ENCODE measurements at regions of chr5 and their contacts with region 1.

Region 1: GRCh38 chr5:172188033-172188892 is at the start of gene STK10:
- DNase-seq: peak; percentile 88
- ATAC-seq: peak; percentile 75
- H3K4me3 Mint-ChIP-seq: peak within 1 kb of the TSS; percentile 100
- H3K27ac Mint-ChIP-seq: peak within 1 kb of the TSS; percentile 97
- H3K4me1 Mint-ChIP-seq: peaks cover 44% of the 10 kb centered on the region
- H3K27me3 Mint-ChIP-seq: no peaks in the 10 kb centered on the region
- CTCF ChIP-seq: peak; percentile 37
- total RNA-seq, gene STK10: 233 and 276 TPM in 2 replicates

Region 2: DNA sequence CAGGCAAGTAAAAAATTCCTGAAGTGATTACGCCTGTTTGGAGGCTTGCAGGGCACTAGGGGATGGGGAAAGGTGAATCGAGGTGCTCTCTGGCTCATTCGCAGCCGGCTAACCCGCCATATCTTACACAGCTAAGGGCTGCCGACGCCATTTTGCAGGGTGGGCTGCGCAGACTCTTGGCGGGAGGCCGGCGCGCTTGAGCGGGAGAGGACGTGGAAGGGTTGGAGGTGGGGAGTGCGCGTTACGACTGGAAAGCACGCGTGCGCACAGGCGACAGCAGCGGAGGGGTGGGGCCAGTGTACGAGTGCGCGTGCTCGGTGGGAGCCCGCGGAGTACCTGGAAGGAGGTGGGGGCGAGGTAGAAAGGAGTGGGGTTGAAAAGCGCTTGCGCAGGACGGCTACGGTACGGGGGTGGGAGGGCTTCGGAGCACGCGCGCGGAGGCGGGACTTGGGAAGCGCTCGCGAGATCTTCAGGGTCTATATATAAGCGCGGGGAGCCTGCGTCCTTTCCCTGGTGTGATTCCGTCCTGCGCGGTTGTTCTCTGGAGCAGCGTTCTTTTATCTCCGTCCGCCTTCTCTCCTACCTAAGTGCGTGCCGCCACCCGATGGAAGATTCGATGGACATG is 800.8 kb before region 1 on chr5 and contains the start of gene NPM1:
- CTCF ChIA-PET with region 1: no interaction called
- POLR2A ChIA-PET with region 1: interaction called, 4 read pairs
- intact Hi-C with region 1: loop called (anchors 5 kb)
- DNase-seq: peak; percentile 92
- ATAC-seq: peak; percentile 85
- H3K4me3 Mint-ChIP-seq: peak within 1 kb of the TSS; percentile 99
- H3K27ac Mint-ChIP-seq: peak within 1 kb of the TSS; percentile 98
- H3K4me1 Mint-ChIP-seq: peaks cover 52% of the 10 kb centered on the region
- H3K27me3 Mint-ChIP-seq: no peaks in the 10 kb centered on the region
- CTCF ChIP-seq: no peak
- total RNA-seq, gene NPM1: 1,505 and 1,563 TPM in 2 replicates

Region 3: DNA sequence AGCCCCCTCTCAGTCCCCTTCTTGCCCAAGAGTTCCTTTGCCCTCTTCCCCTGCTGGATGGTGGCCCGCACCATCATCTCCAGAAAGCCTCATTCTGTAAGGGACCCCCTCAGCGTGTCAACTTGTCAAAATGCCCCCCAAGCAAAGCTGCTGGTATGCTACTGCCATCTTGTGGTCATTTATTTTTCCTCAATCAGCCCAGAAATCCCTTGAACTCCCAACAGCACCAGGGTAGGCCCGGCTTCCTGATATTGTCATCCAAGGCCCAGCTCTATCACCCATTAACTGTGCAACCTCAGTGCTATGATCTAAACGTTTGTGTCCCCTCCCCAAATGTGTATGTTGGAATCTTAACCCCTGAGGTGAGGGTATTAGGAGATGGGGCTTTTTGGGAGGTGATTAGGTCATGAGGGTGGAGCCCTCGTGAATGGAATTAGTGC is 128.6 kb before region 1 on chr5:
- CTCF ChIA-PET with region 1: interaction called, 5 read pairs
- POLR2A ChIA-PET with region 1: no interaction called
- intact Hi-C with region 1: loop called (anchors 5 kb)
- DNase-seq: no peak
- ATAC-seq: no peak
- H3K4me3 Mint-ChIP-seq: no peak overlapping the region
- H3K27ac Mint-ChIP-seq: no peak overlapping the region
- H3K4me1 Mint-ChIP-seq: no peaks in the 10 kb centered on the region
- H3K27me3 Mint-ChIP-seq: no peaks in the 10 kb centered on the region
- CTCF ChIP-seq: no peak

Region 4: GRCh38 chr5:172114875-172115422 is 73.3 kb before region 1 on chr5:
- CTCF ChIA-PET with region 1: interaction called, 74 read pairs
- POLR2A ChIA-PET with region 1: interaction called, 138 read pairs
- intact Hi-C with region 1: loop called (anchors 1 kb)
- DNase-seq: peak; percentile 67
- ATAC-seq: peak; percentile 49
- H3K4me3 Mint-ChIP-seq: peak overlapping the region; percentile 80
- H3K27ac Mint-ChIP-seq: peak overlapping the region; percentile 95
- H3K4me1 Mint-ChIP-seq: peaks cover 70% of the 10 kb centered on the region
- H3K27me3 Mint-ChIP-seq: no peaks in the 10 kb centered on the region
- CTCF ChIP-seq: no peak

Region 5: DNA sequence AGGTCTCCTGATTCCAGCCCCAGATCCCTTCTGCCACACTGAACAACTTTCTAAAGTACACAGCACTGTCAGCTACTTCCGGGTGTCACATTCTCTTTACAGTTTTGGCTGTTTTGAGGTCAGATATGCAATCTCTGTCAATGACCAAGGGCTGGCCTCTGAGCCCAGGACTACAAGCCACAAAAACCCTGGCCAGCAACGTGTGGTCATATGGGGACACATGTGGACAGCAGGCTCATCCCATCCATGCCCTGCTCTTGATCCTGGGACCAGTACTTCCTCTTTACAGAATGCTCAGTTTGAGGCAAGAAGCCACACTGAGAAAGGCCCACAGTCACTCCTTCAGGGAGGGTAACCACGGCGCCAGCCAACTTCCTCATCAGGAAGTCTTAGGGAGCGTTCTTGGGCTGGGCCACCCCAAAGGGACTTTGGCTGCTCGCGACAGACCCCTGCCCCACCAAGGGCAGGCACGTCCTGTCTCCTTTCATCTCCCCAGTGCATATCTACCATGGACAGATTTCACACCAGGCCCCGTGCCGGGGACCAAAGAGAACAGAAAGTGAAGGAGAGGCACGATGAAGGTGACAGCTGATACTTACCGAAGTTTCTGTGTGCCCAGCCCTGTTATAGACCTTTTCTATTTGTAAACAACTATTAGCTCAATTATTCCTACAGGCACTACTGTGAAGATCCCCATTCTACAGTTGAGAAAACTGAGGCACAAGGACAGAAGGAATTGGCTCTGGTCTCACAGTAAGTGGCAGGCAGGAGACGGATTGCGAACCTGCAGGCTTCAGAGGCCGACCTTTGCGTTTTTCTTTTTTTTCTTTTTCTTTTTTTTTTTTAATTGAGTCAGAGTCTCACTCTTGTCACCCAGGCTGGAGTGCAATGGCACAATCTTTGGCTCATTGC is 37.5 kb before region 1 on chr5:
- CTCF ChIA-PET with region 1: interaction called, 4 read pairs
- POLR2A ChIA-PET with region 1: interaction called, 4 read pairs
- intact Hi-C with region 1: loop called (anchors 2 kb)
- DNase-seq: no peak
- ATAC-seq: peak; percentile 80
- H3K4me3 Mint-ChIP-seq: peak overlapping the region; percentile 69
- H3K27ac Mint-ChIP-seq: peak overlapping the region; percentile 79
- H3K4me1 Mint-ChIP-seq: peaks cover 69% of the 10 kb centered on the region
- H3K27me3 Mint-ChIP-seq: no peaks in the 10 kb centered on the region
- CTCF ChIP-seq: no peak

Region 6: GRCh38 chr5:172245703-172246125 is 57.5 kb after region 1 on chr5:
- CTCF ChIA-PET with region 1: no interaction called
- POLR2A ChIA-PET with region 1: no interaction called
- intact Hi-C with region 1: no loop called
- DNase-seq: no peak
- ATAC-seq: no peak
- H3K4me3 Mint-ChIP-seq: no peak overlapping the region
- H3K27ac Mint-ChIP-seq: no peak overlapping the region
- H3K4me1 Mint-ChIP-seq: peaks cover 2% of the 10 kb centered on the region
- H3K27me3 Mint-ChIP-seq: no peaks in the 10 kb centered on the region
- CTCF ChIP-seq: no peak

Region 7: GRCh38 chr5:172283020-172283861 is 95.0 kb after region 1 on chr5 and contains the start of gene UBTD2:
- CTCF ChIA-PET with region 1: interaction called, 15 read pairs
- POLR2A ChIA-PET with region 1: interaction called, 7 read pairs
- intact Hi-C with region 1: loop called (anchors 1 kb)
- DNase-seq: peak; percentile 90
- ATAC-seq: peak; percentile 88
- H3K4me3 Mint-ChIP-seq: peak within 1 kb of the TSS; percentile 90
- H3K27ac Mint-ChIP-seq: peak within 1 kb of the TSS; percentile 68
- H3K4me1 Mint-ChIP-seq: peaks cover 23% of the 10 kb centered on the region
- H3K27me3 Mint-ChIP-seq: no peaks in the 10 kb centered on the region
- CTCF ChIP-seq: peak; percentile 50
- total RNA-seq, gene UBTD2: 8.5 and 9.0 TPM in 2 replicates

Region 8: GRCh38 chr5:172958331-172959046 is 770.2 kb after region 1 on chr5:
- CTCF ChIA-PET with region 1: no interaction called
- POLR2A ChIA-PET with region 1: no interaction called
- intact Hi-C with region 1: loop called (anchors 10 kb)
- DNase-seq: peak; percentile 64
- ATAC-seq: peak; percentile 76
- H3K4me3 Mint-ChIP-seq: peak overlapping the region; percentile 97
- H3K27ac Mint-ChIP-seq: peak overlapping the region; percentile 94
- H3K4me1 Mint-ChIP-seq: peaks cover 31% of the 10 kb centered on the region
- H3K27me3 Mint-ChIP-seq: no peaks in the 10 kb centered on the region
- CTCF ChIP-seq: no peak

Measured in activated B cell treated with CpG ODN at 0.5 μM for 24 hours (primary cell).